Astrocyte of the cerebellum (primary cell): ENCODE measurements at regions of chr2 and their contacts with region 1.

Region 1: DNA sequence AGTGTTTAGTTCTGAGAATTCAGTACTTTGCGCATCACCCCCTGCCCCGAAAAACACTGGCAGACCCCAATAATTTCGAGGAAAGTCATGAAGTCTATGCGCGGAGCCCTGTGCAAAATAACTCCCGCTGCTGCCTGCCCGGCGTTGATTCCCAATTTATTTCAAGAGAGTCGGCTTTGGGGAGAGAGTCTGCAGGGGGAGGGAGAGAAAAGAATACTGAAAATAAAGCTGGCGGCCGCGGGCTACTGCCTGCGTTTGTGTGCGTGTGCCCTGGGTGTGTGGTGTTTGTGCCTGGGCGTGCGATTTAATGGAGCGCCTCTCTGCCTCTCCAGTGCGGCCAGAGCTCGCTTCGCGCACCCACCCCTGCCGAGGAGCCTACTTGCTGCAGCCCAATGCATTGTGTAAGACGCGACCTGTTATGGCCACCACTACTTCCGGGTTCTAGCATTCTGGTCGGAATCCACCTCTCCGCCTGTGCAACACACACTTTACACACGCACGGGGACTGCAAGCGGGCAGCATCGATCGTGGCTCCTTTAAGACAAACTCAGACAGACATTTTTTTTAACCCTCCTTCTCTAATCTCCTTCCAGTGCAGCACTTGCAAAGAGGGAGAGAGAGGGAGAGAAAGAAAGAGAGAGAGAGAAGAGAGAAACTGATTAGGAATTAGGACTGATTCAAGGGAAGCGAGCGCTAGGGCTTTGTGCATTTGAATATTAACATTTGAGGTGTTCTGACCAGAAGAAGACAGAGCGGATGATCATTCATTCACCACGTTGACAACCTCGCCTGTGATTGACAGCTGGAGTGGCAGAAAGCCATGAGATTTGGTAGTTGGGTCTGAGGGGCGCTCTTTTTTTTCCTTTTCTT is at the start of gene MEIS1:
- DNase-seq: peak; percentile 94
- H3K4me3 ChIP-seq: peak within 1 kb of the TSS; percentile 70
- CTCF ChIP-seq: no peak

Region 2: GRCh38 chr2:65939687-65940086 is 495.2 kb before region 1 on chr2:
- in situ Hi-C with region 1: no loop called
- DNase-seq: no peak
- H3K4me3 ChIP-seq: no peak overlapping the region
- CTCF ChIP-seq: no peak

Region 3: GRCh38 chr2:66851449-66851872 is 416.5 kb after region 1 on chr2:
- in situ Hi-C with region 1: loop called (anchors 25 kb)
- DNase-seq: no peak
- H3K4me3 ChIP-seq: no peak overlapping the region
- CTCF ChIP-seq: no peak

Region 4: GRCh38 chr2:68031542-68032160 is 1596.7 kb after region 1 on chr2:
- in situ Hi-C with region 1: loop called (anchors 25 kb)
- DNase-seq: peak; percentile 59
- H3K4me3 ChIP-seq: no peak overlapping the region
- CTCF ChIP-seq: peak; percentile 33